K562 (cell line): ENCODE measurements at regions of chr17 and their contacts with region 1.

Region 1: DNA sequence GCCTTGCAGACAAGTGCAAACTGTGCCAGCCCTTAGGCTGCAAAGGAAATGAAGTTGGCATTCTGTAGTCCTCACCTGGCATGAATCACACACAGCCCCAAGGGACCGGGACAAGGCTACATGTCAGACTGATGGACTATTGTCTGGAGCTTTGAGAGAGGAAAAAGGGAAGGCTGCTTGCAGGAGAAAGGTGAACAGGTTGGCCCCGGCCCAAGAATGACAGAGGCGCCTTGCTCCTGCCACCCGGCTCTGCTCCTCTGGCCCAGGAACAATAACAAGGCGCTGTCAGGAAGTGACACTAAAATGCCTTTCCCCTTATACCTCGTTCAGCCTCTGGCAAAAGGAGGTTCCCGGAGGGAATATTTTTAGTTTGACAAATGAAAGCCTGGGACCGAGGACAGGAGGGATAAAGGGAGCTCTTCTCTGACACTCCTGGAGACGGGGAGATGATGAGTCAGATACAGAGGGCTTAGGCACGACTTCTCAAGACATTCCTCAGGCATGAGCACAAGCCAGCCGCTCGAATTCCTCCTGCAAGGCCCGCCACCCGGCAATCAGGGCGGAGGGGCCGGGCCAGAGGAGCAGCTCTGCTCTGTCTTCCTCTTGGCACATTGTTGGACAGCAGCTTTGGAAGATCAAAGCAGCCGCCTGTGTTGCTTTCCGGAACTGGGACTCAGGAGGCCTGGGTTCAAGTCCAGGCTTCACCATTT is 105.8 kb downstream of the NOG start:
- DNase-seq: no peak
- ATAC-seq: no peak
- H3K4me3 ChIP-seq: no peak overlapping the region
- H3K27ac ChIP-seq: no peak overlapping the region
- H3K4me1 ChIP-seq: no peaks in the 10 kb centered on the region; a peak in 1 of 5 replicates
- H3K27me3 ChIP-seq: peaks cover 0 to 14% of the 10 kb centered on the region in 2 experiments; a peak in 1 of 5 replicates
- CTCF ChIP-seq: no peak
- EP300 ChIP-seq: no peak
- POLR2A ChIP-seq: no peak
- RAD21 ChIP-seq: no peak

Region 2: GRCh38 chr17:56047331-56047730 is 652.0 kb before region 1 on chr17:
- CTCF ChIA-PET with region 1: no interaction called
- POLR2A ChIA-PET with region 1: no interaction called
- in situ Hi-C with region 1: no loop called
- intact Hi-C with region 1: no loop called
- DNase-seq: no peak
- ATAC-seq: no peak
- H3K4me3 ChIP-seq: no peak overlapping the region
- H3K27ac ChIP-seq: no peak overlapping the region
- H3K4me1 ChIP-seq: no peaks in the 10 kb centered on the region
- H3K27me3 ChIP-seq: no peaks in the 10 kb centered on the region
- CTCF ChIP-seq: no peak
- EP300 ChIP-seq: no peak
- POLR2A ChIP-seq: no peak
- RAD21 ChIP-seq: no peak

Region 3: DNA sequence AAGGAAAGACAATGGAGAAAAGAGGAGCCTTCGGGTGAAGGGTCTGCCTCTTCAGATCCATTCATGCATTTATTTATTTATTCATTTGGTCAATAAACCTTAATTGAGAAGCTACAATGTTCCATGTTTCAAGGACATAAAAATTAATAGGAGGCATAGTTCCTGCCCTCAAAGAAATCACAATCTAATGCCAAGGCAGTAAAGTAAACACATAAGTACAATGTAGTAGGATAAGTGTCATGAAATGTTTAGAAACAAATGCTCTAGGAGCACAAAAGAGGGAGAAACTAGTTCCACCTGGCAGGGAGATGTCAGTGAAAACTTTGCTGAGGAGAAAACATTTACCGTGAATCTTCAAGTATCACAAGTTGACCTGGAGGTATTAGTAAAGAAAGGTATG is 209.4 kb before region 1 on chr17:
- CTCF ChIA-PET with region 1: no interaction called
- POLR2A ChIA-PET with region 1: no interaction called
- in situ Hi-C with region 1: no loop called
- intact Hi-C with region 1: no loop called
- DNase-seq: no peak
- ATAC-seq: no peak
- H3K4me3 ChIP-seq: no peak overlapping the region
- H3K27ac ChIP-seq: no peak overlapping the region
- H3K4me1 ChIP-seq: no peaks in the 10 kb centered on the region
- H3K27me3 ChIP-seq: no peaks in the 10 kb centered on the region
- CTCF ChIP-seq: no peak
- EP300 ChIP-seq: no peak
- POLR2A ChIP-seq: no peak
- RAD21 ChIP-seq: no peak

Region 4: GRCh38 chr17:56624315-56624714 is 75.0 kb before region 1 on chr17:
- CTCF ChIA-PET with region 1: no interaction called
- POLR2A ChIA-PET with region 1: interaction called, 3 read pairs
- in situ Hi-C with region 1: loop called (anchors 5 kb)
- intact Hi-C with region 1: no loop called
- DNase-seq: no peak
- ATAC-seq: no peak
- H3K4me3 ChIP-seq: no peak overlapping the region
- H3K27ac ChIP-seq: no peak overlapping the region
- H3K4me1 ChIP-seq: no peaks in the 10 kb centered on the region; a peak in 1 of 5 replicates
- H3K27me3 ChIP-seq: peaks cover 2 to 12% of the 10 kb centered on the region in 2 experiments; a peak in 3 of 5 replicates
- CTCF ChIP-seq: no peak
- EP300 ChIP-seq: no peak
- POLR2A ChIP-seq: no peak
- RAD21 ChIP-seq: no peak